Activated CD4-positive, alpha-beta memory T cell treated with anti-CD3 and anti-CD28 coated beads for 36 hours (primary cell): ENCODE measurements at regions of chr6 and their contacts with region 1.

Region 1: DNA sequence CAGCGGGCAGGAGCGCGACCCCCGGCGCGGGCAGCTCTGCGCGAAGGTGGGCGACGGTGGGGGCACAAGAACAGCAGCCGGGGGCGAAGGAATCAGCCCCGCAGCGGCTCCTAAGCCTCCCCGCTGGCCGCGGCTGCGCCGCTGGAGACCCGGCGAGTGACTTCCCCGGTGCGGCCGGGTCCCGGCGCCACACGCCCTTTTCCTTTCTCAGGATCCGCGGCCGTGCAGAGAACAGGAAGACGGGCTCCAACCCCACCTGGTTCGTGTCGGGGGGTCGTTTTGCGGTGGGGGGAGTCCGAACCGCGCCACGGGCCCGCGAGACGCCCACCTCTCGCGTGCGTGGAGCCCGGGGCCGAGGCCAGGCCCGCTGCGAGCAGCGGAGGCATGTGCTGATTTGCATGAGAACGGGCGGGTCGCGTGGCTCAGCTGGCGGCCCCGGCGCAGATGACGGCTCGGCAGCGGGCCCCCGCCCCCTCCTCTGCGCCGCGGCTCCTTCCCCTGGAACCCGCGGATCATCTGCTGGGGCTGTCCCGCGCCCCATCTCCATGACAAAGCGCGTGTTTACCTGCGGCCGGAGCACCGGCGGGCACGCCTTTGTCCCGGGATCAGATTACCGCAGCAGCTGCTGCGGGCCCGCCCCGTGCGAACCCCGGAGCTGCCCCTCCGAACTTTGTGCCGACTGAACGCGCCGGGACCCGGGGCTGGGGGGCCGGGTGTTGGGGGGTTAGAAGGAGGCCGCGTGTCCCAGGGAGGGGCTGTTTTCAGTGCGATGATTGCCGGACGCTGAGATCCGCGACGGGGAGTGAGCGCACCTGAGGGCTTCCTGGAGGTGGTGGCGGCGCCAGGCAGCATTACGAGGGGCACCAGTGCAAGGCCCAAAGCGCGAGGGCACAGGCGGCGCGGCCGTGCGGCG is 4.9 kb upstream of the DLL1 start:
- DNase-seq: peak; percentile 66
- H3K4me3 Mint-ChIP-seq: peak overlapping the region; percentile 62
- H3K27ac Mint-ChIP-seq: no peak overlapping the region
- H3K4me1 Mint-ChIP-seq: peaks cover 32% of the 10 kb centered on the region
- H3K27me3 Mint-ChIP-seq: peaks cover 55% of the 10 kb centered on the region

Region 2: DNA sequence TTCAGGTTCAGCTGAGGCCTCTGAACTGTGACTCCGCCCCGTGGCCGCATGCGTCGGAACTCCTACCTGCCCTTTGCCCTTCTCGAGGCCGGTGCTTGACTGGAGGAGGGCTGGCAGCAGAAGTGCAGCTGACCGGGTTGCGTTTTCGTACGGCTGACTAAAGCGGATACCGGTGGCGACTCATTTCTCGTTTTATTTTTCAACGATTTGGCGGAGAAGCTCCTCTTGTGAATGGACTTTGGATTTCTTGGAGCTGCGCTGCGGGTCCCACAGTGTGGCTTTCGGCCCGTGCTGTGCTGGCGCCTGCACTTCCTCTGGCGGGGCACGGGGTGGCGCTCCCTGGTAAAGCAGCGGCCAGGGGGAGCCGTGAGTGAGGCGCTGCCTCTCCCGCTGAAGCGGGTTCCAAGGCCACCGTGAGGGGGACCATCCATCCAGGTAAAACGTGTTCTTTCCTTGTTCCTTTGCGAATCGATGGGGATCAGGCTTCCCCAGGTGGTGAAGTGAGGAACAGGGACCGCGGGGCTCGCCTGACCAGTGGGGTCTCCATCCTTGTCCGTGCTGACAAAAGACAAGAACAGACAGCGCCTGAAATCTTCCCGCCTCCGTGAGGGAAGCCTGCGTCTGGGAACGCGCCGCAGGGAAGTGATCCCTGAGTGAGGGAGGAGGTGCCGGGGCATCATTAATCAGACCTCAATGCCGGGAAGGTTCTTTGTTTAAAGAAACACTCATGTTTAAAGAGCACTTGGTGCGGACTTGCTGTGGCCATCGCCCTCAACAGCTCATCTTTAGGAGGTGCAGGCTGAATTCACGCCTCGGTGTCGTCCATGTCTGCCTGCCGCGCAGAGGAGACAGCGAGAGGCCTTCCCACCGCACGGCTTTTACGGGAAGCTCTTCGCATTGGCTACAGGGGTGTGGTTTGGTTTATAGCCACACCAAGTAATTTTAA is 505.5 kb before region 1 on chr6:
- CTCF ChIA-PET with region 1: interaction called, 3 read pairs
- POLR2A ChIA-PET with region 1: interaction called, 3 read pairs
- intact Hi-C with region 1: loop called (anchors 10 kb)
- DNase-seq: peak; percentile 84
- H3K4me3 Mint-ChIP-seq: peak overlapping the region; percentile 78
- H3K27ac Mint-ChIP-seq: peak overlapping the region; percentile 38
- H3K4me1 Mint-ChIP-seq: peaks cover 19% of the 10 kb centered on the region
- H3K27me3 Mint-ChIP-seq: peaks cover 7% of the 10 kb centered on the region

Region 3: GRCh38 chr6:169950558-169950957 is 345.2 kb before region 1 on chr6:
- CTCF ChIA-PET with region 1: interaction called, 4 read pairs
- POLR2A ChIA-PET with region 1: no interaction called
- intact Hi-C with region 1: loop called (anchors 1 kb)
- DNase-seq: peak; percentile 42
- H3K4me3 Mint-ChIP-seq: no peak overlapping the region
- H3K27ac Mint-ChIP-seq: no peak overlapping the region
- H3K4me1 Mint-ChIP-seq: no peaks in the 10 kb centered on the region
- H3K27me3 Mint-ChIP-seq: no peaks in the 10 kb centered on the region

Region 4: GRCh38 chr6:170087941-170088581 is 207.7 kb before region 1 on chr6:
- CTCF ChIA-PET with region 1: no interaction called
- POLR2A ChIA-PET with region 1: no interaction called
- intact Hi-C with region 1: loop called (anchors 10 kb)
- DNase-seq: peak; percentile 75
- H3K4me3 Mint-ChIP-seq: peak overlapping the region; percentile 68
- H3K27ac Mint-ChIP-seq: peak overlapping the region; percentile 85
- H3K4me1 Mint-ChIP-seq: peaks cover 31% of the 10 kb centered on the region
- H3K27me3 Mint-ChIP-seq: no peaks in the 10 kb centered on the region

Region 5: DNA sequence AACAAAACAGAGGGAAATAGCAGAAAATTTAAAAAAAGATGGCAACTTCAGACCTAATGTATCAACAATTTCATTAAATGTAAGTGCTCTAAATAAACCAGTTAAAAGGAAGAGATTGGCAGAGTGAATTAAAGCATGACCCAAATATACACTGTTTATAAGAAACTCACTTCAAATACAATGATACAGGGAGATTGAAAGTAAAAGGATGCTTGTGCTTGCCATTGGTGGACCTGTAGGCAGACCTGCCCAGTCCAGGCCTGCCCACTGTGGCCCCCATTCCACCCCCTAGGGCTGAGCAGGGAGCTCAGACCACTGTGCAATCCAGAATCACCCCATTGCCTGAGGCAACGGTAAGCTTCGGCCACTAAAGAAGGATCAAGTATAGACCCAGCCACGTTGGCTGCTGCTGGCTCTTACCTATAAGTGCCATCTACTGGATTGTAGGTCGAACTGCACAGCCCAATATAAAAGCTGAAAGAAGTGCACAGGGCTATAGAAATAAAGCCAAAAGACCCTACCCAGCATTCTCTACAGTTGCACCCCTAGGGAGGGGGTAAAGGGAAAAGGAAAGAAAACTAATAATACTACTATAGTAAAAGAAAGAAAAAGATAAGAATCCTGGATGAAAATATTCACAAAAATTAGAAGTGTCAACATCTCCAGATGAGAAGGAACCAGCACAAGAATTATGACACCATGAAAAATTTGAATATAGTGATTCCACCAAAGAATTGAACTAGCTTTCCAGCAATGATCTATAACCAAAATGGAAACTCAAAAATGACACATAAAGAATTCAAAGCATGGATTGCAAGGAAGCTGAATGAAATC is 221.2 kb after region 1 on chr6:
- CTCF ChIA-PET with region 1: interaction called, 3 read pairs
- POLR2A ChIA-PET with region 1: no interaction called
- intact Hi-C with region 1: loop called (anchors 2 kb)
- DNase-seq: peak; percentile 46
- H3K4me3 Mint-ChIP-seq: no peak overlapping the region
- H3K27ac Mint-ChIP-seq: no peak overlapping the region
- H3K4me1 Mint-ChIP-seq: no peaks in the 10 kb centered on the region
- H3K27me3 Mint-ChIP-seq: peaks cover 6% of the 10 kb centered on the region